GM12878 (cell line): ENCODE measurements at regions of chr2 and their contacts with region 1.

Region 1: GRCh38 chr2:144357623-144358373 is 162.1 kb downstream of the ZEB2 start:
- DNase-seq: peak; percentile 85
- ATAC-seq: peak; percentile 85
- H3K4me3 ChIP-seq: 0 out of 2 replicates have a peak overlapping the region, but pooled peaks have one; percentile 20
- H3K27ac ChIP-seq: peak overlapping the region; percentile 83; the same call in 1 of the 2 replicates
- H3K4me1 ChIP-seq: peaks cover 29% of the 10 kb centered on the region
- H3K27me3 ChIP-seq: no peaks in the 10 kb centered on the region
- CTCF ChIP-seq: no peak
- EP300 ChIP-seq: peak; percentile 76 to 83; a peak in 3 of 4 replicates
- POLR2A ChIP-seq: no peak
- RAD21 ChIP-seq: peak; percentile 23; the same call in 1 of the 2 replicates

Region 2: DNA sequence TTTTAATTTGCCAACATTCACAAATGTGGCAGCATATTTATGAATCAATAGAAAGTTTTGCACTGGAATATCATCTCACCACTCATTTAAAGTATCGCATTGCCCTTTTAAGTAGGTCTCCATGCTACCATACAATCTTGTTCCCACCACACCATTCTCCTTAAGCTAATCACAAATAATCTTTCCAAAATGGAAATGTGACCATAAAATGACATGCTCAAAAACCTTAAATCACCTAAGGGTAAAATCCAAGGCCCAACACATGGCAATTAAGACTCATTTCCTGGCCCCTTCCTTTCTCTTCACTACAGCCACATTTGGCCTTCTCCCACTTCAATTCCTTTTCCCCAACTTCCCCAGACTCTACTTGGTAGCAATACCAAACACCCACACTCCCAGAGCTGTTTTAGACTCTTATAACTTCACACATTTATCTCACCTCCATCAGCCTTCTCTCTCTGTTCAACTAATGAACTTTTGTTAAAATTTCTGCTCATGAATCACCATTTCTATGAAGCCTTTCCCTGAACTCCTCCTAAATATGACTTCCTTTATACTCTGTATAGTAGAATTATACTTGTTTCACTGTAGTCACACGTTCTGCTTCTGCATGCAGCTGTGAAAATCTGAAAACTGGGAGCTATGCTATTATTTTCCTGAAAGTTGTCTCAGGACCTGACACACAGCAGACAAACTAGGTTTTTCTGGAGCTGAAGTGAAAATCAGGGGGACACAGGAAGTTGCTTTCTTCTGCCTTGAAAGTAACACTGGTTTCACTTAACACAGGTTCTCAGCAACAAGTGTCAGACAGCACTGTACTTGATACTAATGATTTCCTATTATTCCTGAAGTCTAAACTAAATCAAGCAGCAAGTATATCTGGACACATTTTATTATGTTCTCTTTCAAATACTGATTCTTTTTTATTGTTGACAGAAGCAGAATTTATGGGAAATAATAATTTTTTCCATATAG is 141.8 kb before region 1 on chr2:
- CTCF ChIA-PET with region 1: no interaction called
- POLR2A ChIA-PET with region 1: interaction called, 3 read pairs
- RAD21 ChIA-PET with region 1: no interaction called
- SMC1A ChIA-PET with region 1: interaction called, 12 read pairs
- in situ Hi-C with region 1: no loop called
- intact Hi-C with region 1: no loop called
- DNase-seq: peak; percentile 20
- ATAC-seq: peak; percentile 72
- H3K4me3 ChIP-seq: no peak overlapping the region
- H3K27ac ChIP-seq: peak overlapping the region; percentile 16
- H3K4me1 ChIP-seq: peaks cover 28% of the 10 kb centered on the region
- H3K27me3 ChIP-seq: no peaks in the 10 kb centered on the region
- CTCF ChIP-seq: no peak
- EP300 ChIP-seq: 0 out of 4 replicates have a peak, but pooled peaks of 1 of the 2 experiments have one; percentile 9
- POLR2A ChIP-seq: no peak
- RAD21 ChIP-seq: 0 out of 2 replicates have a peak, but pooled peaks have one; percentile 12

Region 3: DNA sequence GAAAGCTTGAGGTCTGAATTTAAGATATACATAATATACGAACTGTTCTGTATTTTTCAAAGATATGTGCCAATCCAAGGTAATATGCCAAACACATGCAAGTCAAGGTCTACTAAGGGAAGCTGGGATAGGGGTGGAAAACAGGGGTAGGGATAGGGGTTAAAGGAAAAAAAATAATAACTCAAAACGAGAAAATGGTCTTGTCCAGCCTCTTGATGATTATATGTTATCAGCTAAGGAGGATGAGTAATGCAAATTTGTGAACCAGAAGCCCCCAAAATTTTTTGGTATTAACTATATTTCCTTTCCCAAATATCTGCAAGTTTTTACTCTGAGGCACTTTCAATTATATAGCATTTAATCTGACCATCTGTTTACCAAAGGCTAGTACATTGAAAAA is 57.2 kb before region 1 on chr2:
- CTCF ChIA-PET with region 1: no interaction called
- POLR2A ChIA-PET with region 1: no interaction called
- RAD21 ChIA-PET with region 1: no interaction called
- SMC1A ChIA-PET with region 1: no interaction called
- in situ Hi-C with region 1: no loop called
- intact Hi-C with region 1: no loop called
- DNase-seq: no peak
- ATAC-seq: no peak
- H3K4me3 ChIP-seq: no peak overlapping the region
- H3K27ac ChIP-seq: no peak overlapping the region
- H3K4me1 ChIP-seq: no peaks in the 10 kb centered on the region
- H3K27me3 ChIP-seq: no peaks in the 10 kb centered on the region
- CTCF ChIP-seq: no peak
- EP300 ChIP-seq: no peak
- POLR2A ChIP-seq: no peak
- RAD21 ChIP-seq: no peak

Region 4: GRCh38 chr2:144332356-144333142 is 25.2 kb before region 1 on chr2:
- CTCF ChIA-PET with region 1: interaction called, 3 read pairs
- POLR2A ChIA-PET with region 1: interaction called, 5 read pairs
- RAD21 ChIA-PET with region 1: interaction called, 5 read pairs
- SMC1A ChIA-PET with region 1: interaction called, 10 read pairs
- in situ Hi-C with region 1: no loop called
- intact Hi-C with region 1: loop called (anchors 1 kb)
- DNase-seq: no peak
- ATAC-seq: peak; percentile 90
- H3K4me3 ChIP-seq: peak overlapping the region; percentile 56; the same call in 1 of the 2 replicates
- H3K27ac ChIP-seq: peak overlapping the region; percentile 78
- H3K4me1 ChIP-seq: peaks cover 8% of the 10 kb centered on the region
- H3K27me3 ChIP-seq: no peaks in the 10 kb centered on the region
- CTCF ChIP-seq: no peak
- EP300 ChIP-seq: no peak
- POLR2A ChIP-seq: peak; percentile 70
- RAD21 ChIP-seq: peak; percentile 19; the same call in 1 of the 2 replicates

Region 5: DNA sequence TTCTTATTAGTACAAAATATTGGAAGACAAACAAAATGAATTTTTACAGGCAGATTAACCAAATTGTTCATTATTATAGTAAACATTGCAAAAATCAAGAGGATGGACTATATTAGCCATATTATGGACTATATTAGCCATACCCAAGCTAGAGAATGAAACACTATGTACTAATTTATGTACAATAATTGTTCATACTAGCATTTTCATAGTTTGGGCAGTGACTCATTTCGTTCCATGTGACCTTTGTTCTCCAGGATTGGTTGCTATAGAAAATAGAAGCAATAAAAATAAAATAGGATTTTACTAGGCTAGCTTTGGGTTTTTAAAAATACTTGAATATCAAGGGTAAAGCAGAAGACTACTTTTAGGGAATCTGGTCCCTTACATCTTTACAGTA is 14.7 kb before region 1 on chr2:
- CTCF ChIA-PET with region 1: interaction called, 7 read pairs
- POLR2A ChIA-PET with region 1: interaction called, 6 read pairs
- RAD21 ChIA-PET with region 1: interaction called, 3 read pairs
- SMC1A ChIA-PET with region 1: interaction called, 44 read pairs
- in situ Hi-C with region 1: no loop called
- intact Hi-C with region 1: no loop called
- DNase-seq: no peak
- ATAC-seq: peak; percentile 86
- H3K4me3 ChIP-seq: no peak overlapping the region
- H3K27ac ChIP-seq: no peak overlapping the region
- H3K4me1 ChIP-seq: no peaks in the 10 kb centered on the region
- H3K27me3 ChIP-seq: no peaks in the 10 kb centered on the region
- CTCF ChIP-seq: no peak
- EP300 ChIP-seq: peak in 1 of 2 experiments; percentile 34; a peak in 1 of 4 replicates
- POLR2A ChIP-seq: no peak
- RAD21 ChIP-seq: no peak

Region 6: DNA sequence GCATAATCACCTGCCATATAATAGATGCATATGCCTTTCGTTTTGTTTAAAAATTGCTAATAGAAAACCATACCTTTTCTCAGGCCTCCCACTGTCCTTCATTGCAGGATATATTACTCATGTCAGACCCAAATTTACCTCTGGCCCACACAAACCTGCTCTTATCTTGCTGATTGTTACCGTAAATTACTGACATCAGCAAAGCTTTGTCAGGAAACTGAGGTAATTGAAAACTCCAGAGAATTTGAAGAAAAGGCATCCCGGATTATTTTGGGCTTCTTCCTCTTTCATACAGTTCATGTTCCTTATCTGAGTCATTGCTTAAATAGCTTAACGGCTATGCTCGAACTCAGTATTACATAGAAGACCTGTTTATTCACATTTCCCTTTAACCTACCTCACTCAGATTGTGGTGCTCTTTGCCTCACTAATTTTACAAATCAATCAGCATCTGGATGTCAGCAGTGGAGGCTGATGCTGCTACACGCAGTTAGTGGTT is 16.4 kb after region 1 on chr2:
- CTCF ChIA-PET with region 1: interaction called, 3 read pairs
- POLR2A ChIA-PET with region 1: interaction called, 3 read pairs
- RAD21 ChIA-PET with region 1: interaction called, 35 read pairs
- SMC1A ChIA-PET with region 1: interaction called, 17 read pairs
- in situ Hi-C with region 1: no loop called
- intact Hi-C with region 1: loop called (anchors 2 kb)
- DNase-seq: peak; percentile 43
- ATAC-seq: peak; percentile 88
- H3K4me3 ChIP-seq: no peak overlapping the region
- H3K27ac ChIP-seq: no peak overlapping the region
- H3K4me1 ChIP-seq: peaks cover 5% of the 10 kb centered on the region
- H3K27me3 ChIP-seq: no peaks in the 10 kb centered on the region
- CTCF ChIP-seq: no peak
- EP300 ChIP-seq: 0 out of 4 replicates have a peak, but pooled peaks of 1 of the 2 experiments have one; percentile 30
- POLR2A ChIP-seq: no peak
- RAD21 ChIP-seq: 0 out of 2 replicates have a peak, but pooled peaks have one; percentile 25

Region 7: DNA sequence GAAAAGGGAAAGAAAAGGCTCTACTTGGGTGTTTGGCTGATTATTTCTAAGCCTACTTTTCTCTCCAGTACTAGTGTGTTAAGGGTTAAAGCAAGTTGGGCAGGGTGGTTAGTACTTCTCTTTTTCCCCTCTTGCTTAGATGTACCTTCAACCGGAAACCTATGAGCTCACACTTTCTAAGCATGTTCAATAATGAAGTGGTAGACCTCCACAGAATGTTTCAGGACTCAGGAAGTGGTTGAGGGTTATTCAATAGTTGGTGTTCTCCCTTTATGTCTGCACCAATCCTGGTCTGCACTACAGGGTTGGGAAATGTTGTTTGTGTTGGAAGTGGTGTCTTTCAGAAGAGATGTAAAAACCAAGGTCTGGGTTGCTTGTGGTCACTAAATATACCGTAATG is 25.1 kb after region 1 on chr2:
- CTCF ChIA-PET with region 1: interaction called, 4 read pairs
- POLR2A ChIA-PET with region 1: no interaction called
- RAD21 ChIA-PET with region 1: no interaction called
- SMC1A ChIA-PET with region 1: interaction called, 5 read pairs
- in situ Hi-C with region 1: no loop called
- intact Hi-C with region 1: loop called (anchors 2 kb)
- DNase-seq: peak; percentile 80
- ATAC-seq: peak; percentile 99
- H3K4me3 ChIP-seq: no peak overlapping the region
- H3K27ac ChIP-seq: no peak overlapping the region
- H3K4me1 ChIP-seq: peaks cover 8% of the 10 kb centered on the region; the same call in 1 of the 2 replicates
- H3K27me3 ChIP-seq: no peaks in the 10 kb centered on the region; a peak in 1 of 4 replicates
- CTCF ChIP-seq: no peak
- EP300 ChIP-seq: peak; percentile 22 to 49; a peak in 1 of 4 replicates
- POLR2A ChIP-seq: no peak
- RAD21 ChIP-seq: no peak

Region 8: GRCh38 chr2:145258903-145259579 is 901.2 kb after region 1 on chr2:
- CTCF ChIA-PET with region 1: no interaction called
- POLR2A ChIA-PET with region 1: no interaction called
- RAD21 ChIA-PET with region 1: no interaction called
- SMC1A ChIA-PET with region 1: no interaction called
- in situ Hi-C with region 1: no loop called
- intact Hi-C with region 1: no loop called
- DNase-seq: no peak
- ATAC-seq: 0 out of 3 replicates have a peak, but pooled peaks have one; percentile 31
- H3K4me3 ChIP-seq: no peak overlapping the region
- H3K27ac ChIP-seq: no peak overlapping the region
- H3K4me1 ChIP-seq: no peaks in the 10 kb centered on the region
- H3K27me3 ChIP-seq: no peaks in the 10 kb centered on the region
- CTCF ChIP-seq: no peak
- EP300 ChIP-seq: no peak
- POLR2A ChIP-seq: no peak
- RAD21 ChIP-seq: no peak